T-cell (primary cell): ENCODE measurements at regions of chr7 and their contacts with region 1.

Region 1: GRCh38 chr7:27196287-27196767 is 3.6 kb downstream of the HOXA13 start:
- DNase-seq: peak; percentile 49 to 89 (median 78)
- ATAC-seq: peak in 2 of 4 experiments; percentile 34 to 46
- H3K4me3 ChIP-seq: no peak overlapping the region
- H3K4me3 Mint-ChIP-seq: no peak overlapping the region
- H3K27ac ChIP-seq: no peak overlapping the region
- H3K27ac Mint-ChIP-seq: no peak overlapping the region
- H3K4me1 ChIP-seq: peaks cover 3 to 52% of the 10 kb centered on the region in 2 experiments
- H3K4me1 Mint-ChIP-seq: peaks cover 37 to 40% (median 39%) of the 10 kb centered on the region in 3 donors
- H3K27me3 ChIP-seq: peaks cover 33 to 60% of the 10 kb centered on the region in 2 experiments
- H3K27me3 Mint-ChIP-seq: peaks cover 71 to 81% of the 10 kb centered on the region in 2 donors

Region 2: GRCh38 chr7:27130540-27131389 is 65.6 kb before region 1 on chr7 and contains the start of gene HOXA4:
- CTCF ChIA-PET with region 1: no interaction called
- POLR2A ChIA-PET with region 1: no interaction called
- DNase-seq: peak; percentile 44 to 85 (median 73)
- ATAC-seq: peak; percentile 89 to 94 (median 90)
- H3K4me3 ChIP-seq: peak within 1 kb of the TSS; percentile 72 to 89
- H3K4me3 Mint-ChIP-seq: peak within 1 kb of the TSS; percentile 72 to 74 (median 73)
- H3K27ac ChIP-seq: peak within 1 kb of the TSS; percentile 70
- H3K27ac Mint-ChIP-seq: no peak within 1 kb of the TSS
- H3K4me1 ChIP-seq: peaks cover 4 to 15% of the 10 kb centered on the region in 2 experiments
- H3K4me1 Mint-ChIP-seq: peaks cover 0 to 10% (median 5%) of the 10 kb centered on the region in 3 donors
- H3K27me3 ChIP-seq: peaks cover 0 to 11% of the 10 kb centered on the region in 2 experiments
- H3K27me3 Mint-ChIP-seq: peaks cover 8 to 57% of the 10 kb centered on the region in 2 donors
- total RNA-seq, gene HOXA4: 0.25 to 0.38 (median 0.36) TPM in 3 of 5 donors, not detected in the others

Region 3: GRCh38 chr7:27160546-27161213 is 35.6 kb before region 1 on chr7:
- CTCF ChIA-PET with region 1: interaction called, 5 to 10 read pairs
- POLR2A ChIA-PET with region 1: no interaction called
- DNase-seq: peak; percentile 50 to 92 (median 79)
- ATAC-seq: peak; percentile 70 to 85 (median 74)
- H3K4me3 ChIP-seq: peak overlapping the region; percentile 57 to 81
- H3K4me3 Mint-ChIP-seq: peak overlapping the region; percentile 43 to 73 (median 63)
- H3K27ac ChIP-seq: no peak overlapping the region
- H3K27ac Mint-ChIP-seq: no peak overlapping the region
- H3K4me1 ChIP-seq: peaks cover 2 to 61% of the 10 kb centered on the region in 2 experiments
- H3K4me1 Mint-ChIP-seq: peaks cover 35 to 41% (median 40%) of the 10 kb centered on the region in 3 donors
- H3K27me3 ChIP-seq: peaks cover 2 to 90% of the 10 kb centered on the region in 2 experiments
- H3K27me3 Mint-ChIP-seq: peaks cover 49 to 82% of the 10 kb centered on the region in 2 donors

Region 4: GRCh38 chr7:27220440-27220955 is 24.2 kb after region 1 on chr7:
- CTCF ChIA-PET with region 1: no interaction called
- POLR2A ChIA-PET with region 1: no interaction called
- DNase-seq: no peak
- ATAC-seq: peak in 1 of 4 experiments; percentile 37
- H3K4me3 ChIP-seq: no peak overlapping the region
- H3K4me3 Mint-ChIP-seq: no peak overlapping the region
- H3K27ac ChIP-seq: no peak overlapping the region
- H3K27ac Mint-ChIP-seq: no peak overlapping the region
- H3K4me1 ChIP-seq: peaks cover 0 to 3% of the 10 kb centered on the region in 2 experiments
- H3K4me1 Mint-ChIP-seq: peaks cover 5 to 10% (median 8%) of the 10 kb centered on the region in 3 donors
- H3K27me3 ChIP-seq: peaks cover 34 to 40% of the 10 kb centered on the region in 2 experiments
- H3K27me3 Mint-ChIP-seq: peaks cover 76 to 77% of the 10 kb centered on the region in 2 donors

Region 5: DNA sequence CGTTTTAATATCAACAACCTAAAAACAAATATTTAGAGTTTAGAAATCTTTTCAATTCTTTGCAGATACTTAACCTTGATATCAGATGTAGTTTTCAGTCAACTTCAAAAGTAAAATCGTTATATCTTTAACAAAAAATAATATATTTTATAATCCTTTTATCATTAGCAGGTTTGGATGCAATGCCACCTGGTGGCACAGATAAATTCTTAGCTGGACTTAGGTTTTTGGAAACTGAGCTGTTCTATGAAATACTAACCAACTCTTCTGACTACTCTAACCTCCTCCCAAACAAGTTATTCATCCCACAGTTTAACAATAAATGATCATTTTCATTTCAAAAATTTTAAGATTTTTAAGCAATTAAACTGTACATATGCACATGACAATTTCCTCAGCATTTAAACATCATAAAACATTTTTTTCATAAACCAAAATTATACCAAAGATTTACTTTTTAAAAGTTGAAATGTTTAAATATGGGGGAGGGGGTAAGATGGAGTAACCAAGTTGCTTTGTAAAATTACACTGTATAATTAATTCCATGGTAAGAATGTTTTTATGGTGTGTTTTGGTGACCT is 409.5 kb after region 1 on chr7:
- CTCF ChIA-PET with region 1: interaction called in 1 of 2 experiments, 18 read pairs
- POLR2A ChIA-PET with region 1: interaction called in 1 of 2 experiments, 5 read pairs
- DNase-seq: peak in 1 of 35 experiments; percentile 2
- ATAC-seq: no peak
- H3K4me3 ChIP-seq: no peak overlapping the region
- H3K4me3 Mint-ChIP-seq: no peak overlapping the region
- H3K27ac ChIP-seq: no peak overlapping the region
- H3K27ac Mint-ChIP-seq: no peak overlapping the region
- H3K4me1 ChIP-seq: no peaks in the 10 kb centered on the region
- H3K4me1 Mint-ChIP-seq: no peaks in the 10 kb centered on the region
- H3K27me3 ChIP-seq: no peaks in the 10 kb centered on the region
- H3K27me3 Mint-ChIP-seq: no peaks in the 10 kb centered on the region

Region 6: GRCh38 chr7:27921081-27921836 is 724.9 kb after region 1 on chr7:
- CTCF ChIA-PET with region 1: interaction called, 4 to 12 read pairs
- POLR2A ChIA-PET with region 1: no interaction called
- DNase-seq: peak in 5 of 35 experiments; percentile 9 to 58 (median 22)
- ATAC-seq: peak in 1 of 4 experiments; percentile 50
- H3K4me3 ChIP-seq: no peak overlapping the region
- H3K4me3 Mint-ChIP-seq: no peak overlapping the region
- H3K27ac ChIP-seq: no peak overlapping the region
- H3K27ac Mint-ChIP-seq: no peak overlapping the region
- H3K4me1 ChIP-seq: no peaks in the 10 kb centered on the region
- H3K4me1 Mint-ChIP-seq: no peaks in the 10 kb centered on the region
- H3K27me3 ChIP-seq: no peaks in the 10 kb centered on the region
- H3K27me3 Mint-ChIP-seq: no peaks in the 10 kb centered on the region

Region 7: DNA sequence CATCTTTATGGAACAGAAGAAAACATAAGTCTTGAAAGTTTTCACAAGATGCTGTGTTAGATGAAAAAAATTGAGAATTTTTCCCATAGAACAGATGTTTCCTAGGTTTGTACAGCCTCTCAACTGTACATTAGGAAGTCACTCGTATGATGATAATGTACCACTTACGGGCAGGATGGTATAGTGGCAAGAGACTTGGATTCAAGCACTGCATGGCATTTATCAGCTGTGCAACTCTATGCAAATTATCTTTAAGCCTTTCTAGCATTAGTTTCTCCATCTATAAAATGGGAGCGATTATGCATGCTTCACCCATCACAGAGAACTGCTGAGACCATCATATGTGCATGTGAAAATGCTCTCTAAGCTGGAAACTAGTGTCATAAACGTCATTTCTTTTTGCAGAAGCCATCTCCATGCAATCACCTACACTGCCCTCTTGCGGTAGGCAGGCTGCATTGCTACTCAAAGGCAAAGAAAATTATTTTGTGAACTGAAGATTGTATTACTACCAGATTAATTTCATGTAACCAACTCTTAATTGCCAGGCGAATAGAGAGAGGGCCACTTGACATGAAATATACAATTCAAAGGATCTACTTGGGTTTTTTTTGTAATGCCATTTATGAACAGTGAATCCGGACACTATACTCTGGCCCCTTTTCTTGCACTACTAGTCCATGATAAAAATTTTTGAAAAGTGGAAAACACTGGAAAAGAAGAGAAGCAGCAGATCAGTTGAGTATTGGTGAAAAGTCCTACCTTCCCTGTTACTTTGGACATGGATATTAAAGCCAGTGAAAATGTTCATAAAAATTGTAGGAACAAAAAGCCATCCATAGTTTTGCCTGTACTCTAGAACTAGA is 881.9 kb after region 1 on chr7:
- CTCF ChIA-PET with region 1: interaction called in 1 of 2 experiments, 13 read pairs
- POLR2A ChIA-PET with region 1: no interaction called
- DNase-seq: peak in 30 of 35 experiments; percentile 8 to 70 (median 34)
- ATAC-seq: peak in 2 of 4 experiments; percentile 43 to 76
- H3K4me3 ChIP-seq: no peak overlapping the region
- H3K4me3 Mint-ChIP-seq: no peak overlapping the region
- H3K27ac ChIP-seq: no peak overlapping the region
- H3K27ac Mint-ChIP-seq: no peak overlapping the region
- H3K4me1 ChIP-seq: peaks cover 0 to under 1% of the 10 kb centered on the region in 2 experiments
- H3K4me1 Mint-ChIP-seq: peaks cover 5 to 18% (median 8%) of the 10 kb centered on the region in 3 donors
- H3K27me3 ChIP-seq: no peaks in the 10 kb centered on the region
- H3K27me3 Mint-ChIP-seq: no peaks in the 10 kb centered on the region